Transverse colon (tissue), 4 donors: ENCODE measurements at regions of chr6 and their contacts with region 1.

Region 1: DNA sequence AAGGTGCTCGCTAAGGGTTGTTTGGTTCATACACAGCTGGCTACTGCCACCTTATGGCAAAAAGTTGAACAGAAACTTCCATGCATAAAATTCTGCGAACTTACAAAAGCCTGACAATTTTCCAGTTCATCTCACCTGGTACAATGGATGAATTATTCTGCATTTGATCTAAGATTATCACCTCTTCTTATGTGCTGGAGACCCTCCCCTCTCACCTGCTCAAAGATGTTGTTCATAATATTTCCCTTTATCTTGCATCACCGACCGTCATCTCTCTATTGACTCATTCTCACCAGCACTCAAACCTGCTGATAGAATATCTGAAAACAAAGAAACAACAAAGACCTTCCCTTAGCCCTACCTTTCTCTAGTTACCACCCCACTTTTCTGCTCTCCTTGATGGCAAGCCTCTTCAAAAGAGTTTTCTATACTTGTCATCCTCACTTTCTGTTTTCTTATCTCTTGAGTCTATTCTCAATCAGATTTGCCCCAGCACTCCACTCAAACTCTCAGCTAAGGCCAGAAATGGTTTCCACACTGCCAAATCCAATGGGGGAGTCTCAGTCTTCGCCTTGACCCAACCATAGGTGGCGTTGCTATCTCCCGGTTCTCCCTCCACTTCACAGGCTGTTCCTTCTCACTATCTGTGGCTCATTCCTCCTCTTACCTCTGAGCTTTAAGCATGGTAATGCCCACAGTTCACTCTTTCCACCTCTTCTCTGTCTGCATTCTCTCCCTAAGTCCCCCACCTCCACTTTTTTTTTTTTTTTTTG is 25.8 kb downstream of the SNRNP48 start:
- DNase-seq: peak; percentile 33
- H3K4me3 ChIP-seq: peak overlapping the region in 1 of 4 donors; percentile 14
- H3K27ac ChIP-seq: no peak overlapping the region
- H3K4me1 ChIP-seq: peaks cover 0 to 13% (median 4%) of the 10 kb centered on the region in 4 donors
- H3K27me3 ChIP-seq: no peaks in the 10 kb centered on the region
- CTCF ChIP-seq: peak; percentile 65 to 82 (median 67)
- EP300 ChIP-seq: no peak
- POLR2A ChIP-seq: no peak

Region 2: GRCh38 chr6:6661684-6662083 is 954.1 kb before region 1 on chr6:
- in situ Hi-C with region 1: loop called in 1 of 4 experiments (anchors 25 kb)
- intact Hi-C with region 1: no loop called
- DNase-seq: peak; percentile 62
- H3K4me3 ChIP-seq: no peak overlapping the region
- H3K27ac ChIP-seq: peak overlapping the region in 1 of 4 donors; percentile 11
- H3K4me1 ChIP-seq: peaks cover 8 to 17% (median 13%) of the 10 kb centered on the region in 4 donors
- H3K27me3 ChIP-seq: no peaks in the 10 kb centered on the region
- CTCF ChIP-seq: no peak
- EP300 ChIP-seq: no peak
- POLR2A ChIP-seq: no peak

Region 3: DNA sequence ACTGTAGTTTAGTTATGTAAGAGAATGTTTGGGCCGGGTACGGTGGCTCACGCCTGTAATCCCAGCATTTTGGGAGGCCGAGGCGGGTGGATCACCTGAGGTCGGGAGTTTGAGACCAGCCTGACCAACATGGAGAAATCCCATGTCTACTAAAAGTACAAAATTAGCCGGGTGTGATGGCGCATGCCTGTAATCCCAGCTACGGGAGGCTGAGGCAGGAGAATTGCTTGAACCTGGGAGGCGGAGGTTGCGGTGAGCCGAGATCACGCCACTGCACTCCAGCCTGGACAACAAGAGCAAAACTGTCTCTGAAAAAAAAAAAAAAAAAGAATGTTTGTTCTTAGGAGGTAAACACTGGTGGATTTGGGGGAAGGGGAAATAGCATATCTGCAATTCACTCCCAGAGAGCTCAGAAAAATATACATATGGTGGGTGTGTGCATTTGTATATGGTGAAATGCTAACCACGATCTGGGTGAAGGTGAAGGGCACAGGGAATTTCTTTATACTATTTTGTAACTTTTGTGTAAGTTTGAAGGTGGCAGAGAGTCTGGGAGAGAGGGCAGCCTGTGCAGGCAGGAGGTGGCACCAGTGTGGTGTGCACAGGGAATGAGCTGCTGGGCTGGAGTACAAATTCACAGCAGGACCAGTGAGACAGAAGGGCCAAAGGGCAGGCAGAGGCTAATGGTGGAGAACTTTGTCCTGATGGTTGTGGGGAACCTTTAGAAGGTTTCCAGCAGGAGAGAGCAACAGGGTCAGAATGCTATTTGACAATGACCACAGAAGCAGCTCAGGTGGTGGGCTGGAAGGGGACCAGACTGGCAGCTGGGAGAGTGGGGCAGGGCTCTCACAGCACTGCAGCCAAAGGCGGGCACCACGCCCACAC is 345.2 kb before region 1 on chr6:
- in situ Hi-C with region 1: loop called in 1 of 4 experiments (anchors 10 kb)
- intact Hi-C with region 1: no loop called
- DNase-seq: no peak
- H3K4me3 ChIP-seq: no peak overlapping the region
- H3K27ac ChIP-seq: no peak overlapping the region
- H3K4me1 ChIP-seq: no peaks in the 10 kb centered on the region
- H3K27me3 ChIP-seq: no peaks in the 10 kb centered on the region
- CTCF ChIP-seq: no peak
- EP300 ChIP-seq: no peak
- POLR2A ChIP-seq: no peak

Region 4: DNA sequence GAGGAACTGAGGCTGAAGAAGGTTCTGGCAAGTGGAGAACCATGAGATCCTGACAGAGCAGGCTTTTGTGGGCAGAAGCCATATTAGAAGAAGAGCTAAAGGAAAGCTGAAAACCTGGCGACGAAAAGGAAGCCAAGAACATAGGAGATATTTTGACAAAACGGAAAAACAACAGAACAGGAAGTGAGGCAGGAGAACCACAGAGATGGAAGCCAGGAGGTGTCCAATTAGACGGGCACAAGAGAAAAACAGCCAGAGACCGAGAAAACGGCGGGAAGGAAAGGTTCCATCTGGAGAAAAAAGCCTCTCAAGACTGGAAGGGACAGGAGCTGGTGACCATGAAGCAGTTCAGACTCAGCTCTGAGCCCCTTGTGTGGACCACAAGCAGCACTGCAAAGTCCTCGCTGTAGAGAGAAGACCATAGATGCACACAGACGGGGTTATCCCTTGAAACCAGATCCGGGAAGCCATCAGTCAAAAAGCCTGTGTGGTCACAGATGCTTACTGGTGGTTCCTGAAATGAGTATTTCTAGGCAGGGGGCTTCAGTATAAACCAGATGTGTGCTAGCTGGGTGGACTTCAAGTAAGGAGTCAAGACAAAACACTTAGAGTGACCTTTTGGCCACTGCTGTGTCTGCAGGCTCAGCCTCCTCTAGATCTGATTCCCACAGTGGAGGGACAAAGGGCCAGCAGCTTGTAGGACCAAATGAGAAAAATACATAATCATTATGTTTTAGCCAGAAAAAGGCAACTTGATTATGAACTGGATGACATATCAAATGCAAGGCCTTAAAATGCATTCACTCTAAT is 333.5 kb before region 1 on chr6:
- in situ Hi-C with region 1: loop called in 3 of 4 experiments (anchors 5 to 10 kb)
- intact Hi-C with region 1: loop called (anchors 2 kb)
- DNase-seq: no peak
- H3K4me3 ChIP-seq: no peak overlapping the region
- H3K27ac ChIP-seq: no peak overlapping the region
- H3K4me1 ChIP-seq: peaks cover 0 to 3% (median 0%) of the 10 kb centered on the region in 4 donors
- H3K27me3 ChIP-seq: no peaks in the 10 kb centered on the region
- CTCF ChIP-seq: no peak
- EP300 ChIP-seq: no peak
- POLR2A ChIP-seq: no peak